ENCODE measurements at regions of chr2 and their contacts with region 1.

Region 1: GRCh38 chr2:72993147-72993932 is 76.0 kb downstream of the EMX1 start:
- DNase-seq: peak; percentile 27
- ATAC-seq: peak; percentile 71
- H3K4me3 Mint-ChIP-seq: no peak overlapping the region
- H3K27ac Mint-ChIP-seq: no peak overlapping the region
- H3K4me1 Mint-ChIP-seq: no peaks in the 10 kb centered on the region
- H3K27me3 Mint-ChIP-seq: no peaks in the 10 kb centered on the region
- CTCF ChIP-seq: peak; percentile 81

Region 2: GRCh38 chr2:72973566-72974435 is 19.5 kb before region 1 on chr2:
- CTCF ChIA-PET with region 1: interaction called, 10 read pairs
- POLR2A ChIA-PET with region 1: no interaction called
- intact Hi-C with region 1: no loop called
- DNase-seq: no peak
- ATAC-seq: peak; percentile 73
- H3K4me3 Mint-ChIP-seq: no peak overlapping the region
- H3K27ac Mint-ChIP-seq: no peak overlapping the region
- H3K4me1 Mint-ChIP-seq: no peaks in the 10 kb centered on the region
- H3K27me3 Mint-ChIP-seq: no peaks in the 10 kb centered on the region
- CTCF ChIP-seq: no peak

Region 3: DNA sequence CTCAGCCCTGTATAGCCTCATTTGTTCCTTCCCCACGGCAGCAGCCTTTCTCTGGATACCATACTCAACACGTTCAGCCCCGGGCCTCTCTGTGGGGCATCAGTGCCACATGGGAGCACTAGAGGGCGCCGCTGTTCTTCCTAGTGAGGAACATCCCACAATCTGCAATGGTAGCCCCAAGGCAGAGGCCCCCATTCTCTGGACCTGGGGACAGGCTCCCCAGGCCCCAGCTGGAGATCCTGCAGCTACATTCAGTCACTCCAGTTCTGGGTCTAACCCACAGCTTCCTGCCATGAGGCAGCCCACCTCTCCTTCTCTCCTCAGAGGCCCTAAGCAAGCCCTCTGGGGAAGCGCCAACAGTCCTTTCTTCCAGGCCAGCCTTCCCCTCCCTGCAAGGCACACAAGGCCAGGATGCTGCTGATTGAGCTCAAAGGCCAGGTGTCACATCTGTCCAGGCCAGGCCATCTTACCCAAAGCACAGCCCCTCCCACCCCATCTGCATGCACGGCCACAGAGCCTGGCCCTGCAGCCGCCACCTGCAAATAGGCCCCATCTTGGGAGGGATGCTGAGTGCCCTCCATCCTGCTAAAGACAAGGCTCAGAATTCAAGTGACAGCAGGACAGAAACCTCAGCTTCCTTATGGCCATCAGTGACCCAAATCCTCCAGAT is 92.5 kb after region 1 on chr2:
- CTCF ChIA-PET with region 1: interaction called, 3 read pairs
- POLR2A ChIA-PET with region 1: no interaction called
- intact Hi-C with region 1: loop called (anchors 1 kb)
- DNase-seq: peak; percentile 62
- ATAC-seq: peak; percentile 96
- H3K4me3 Mint-ChIP-seq: no peak overlapping the region
- H3K27ac Mint-ChIP-seq: no peak overlapping the region
- H3K4me1 Mint-ChIP-seq: no peaks in the 10 kb centered on the region
- H3K27me3 Mint-ChIP-seq: peaks cover 3% of the 10 kb centered on the region
- CTCF ChIP-seq: no peak

Region 4: GRCh38 chr2:73112913-73113633 is 119.7 kb after region 1 on chr2 and contains the start of gene RAB11FIP5:
- CTCF ChIA-PET with region 1: no interaction called
- POLR2A ChIA-PET with region 1: no interaction called
- intact Hi-C with region 1: loop called (anchors 2 kb)
- DNase-seq: peak; percentile 75
- ATAC-seq: peak; percentile 91
- H3K4me3 Mint-ChIP-seq: peak within 1 kb of the TSS; percentile 77
- H3K27ac Mint-ChIP-seq: peak within 1 kb of the TSS; percentile 59
- H3K4me1 Mint-ChIP-seq: peaks cover 11% of the 10 kb centered on the region
- H3K27me3 Mint-ChIP-seq: no peaks in the 10 kb centered on the region
- CTCF ChIP-seq: no peak
- total RNA-seq, gene RAB11FIP5: 3.2 and 3.5 TPM in 2 replicates

Region 5: GRCh38 chr2:73163483-73164367 is 170.4 kb after region 1 on chr2:
- CTCF ChIA-PET with region 1: interaction called, 4 read pairs
- POLR2A ChIA-PET with region 1: no interaction called
- intact Hi-C with region 1: loop called (anchors 1 kb)
- DNase-seq: peak; percentile 56
- ATAC-seq: peak; percentile 94
- H3K4me3 Mint-ChIP-seq: no peak overlapping the region
- H3K27ac Mint-ChIP-seq: no peak overlapping the region
- H3K4me1 Mint-ChIP-seq: no peaks in the 10 kb centered on the region
- H3K27me3 Mint-ChIP-seq: peaks cover 11% of the 10 kb centered on the region
- CTCF ChIP-seq: peak; percentile 30